CD4-positive, alpha-beta T cell (primary cell): ENCODE measurements at regions of chr10 and their contacts with region 1.

Region 1: DNA sequence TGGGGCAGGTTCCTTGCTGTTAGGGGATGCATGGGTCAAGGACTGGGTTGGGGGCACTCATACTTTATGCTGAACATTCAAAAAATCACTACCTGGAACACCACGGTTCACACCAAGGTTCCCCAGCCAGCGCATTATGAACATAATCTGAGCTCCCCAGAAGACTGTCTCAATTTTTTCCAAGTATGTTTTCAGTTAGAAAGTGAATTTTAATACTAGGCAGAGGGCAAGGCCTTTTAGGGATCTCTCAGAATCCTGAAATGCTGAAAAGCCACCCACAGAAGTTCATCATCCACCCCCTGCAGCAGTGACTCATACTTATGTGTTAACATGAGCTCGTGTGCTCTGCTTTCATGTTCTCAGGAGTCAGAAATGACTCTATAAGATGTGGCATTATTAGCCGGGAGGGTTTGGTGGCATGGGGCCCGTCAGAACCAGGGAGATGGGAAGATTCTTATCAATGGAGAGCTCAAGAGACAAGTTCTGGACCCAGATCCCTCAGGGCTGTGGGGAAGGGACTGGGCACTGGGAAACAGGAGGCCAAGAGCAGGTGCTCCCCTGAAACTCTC is 185.2 kb upstream of the ITGB1 start:
- DNase-seq: peak in 8 of 14 experiments; percentile 20 to 70 (median 30)
- ATAC-seq: peak; percentile 14
- H3K4me3 ChIP-seq: no peak overlapping the region
- H3K4me3 Mint-ChIP-seq: no peak overlapping the region
- H3K27ac ChIP-seq: no peak overlapping the region
- H3K27ac Mint-ChIP-seq: peak overlapping the region; percentile 52
- H3K4me1 ChIP-seq: peaks cover 70% of the 10 kb centered on the region
- H3K4me1 Mint-ChIP-seq: peaks cover 52% of the 10 kb centered on the region
- H3K27me3 ChIP-seq: no peaks in the 10 kb centered on the region
- H3K27me3 Mint-ChIP-seq: no peaks in the 10 kb centered on the region
- CTCF ChIP-seq: no peak

Region 2: DNA sequence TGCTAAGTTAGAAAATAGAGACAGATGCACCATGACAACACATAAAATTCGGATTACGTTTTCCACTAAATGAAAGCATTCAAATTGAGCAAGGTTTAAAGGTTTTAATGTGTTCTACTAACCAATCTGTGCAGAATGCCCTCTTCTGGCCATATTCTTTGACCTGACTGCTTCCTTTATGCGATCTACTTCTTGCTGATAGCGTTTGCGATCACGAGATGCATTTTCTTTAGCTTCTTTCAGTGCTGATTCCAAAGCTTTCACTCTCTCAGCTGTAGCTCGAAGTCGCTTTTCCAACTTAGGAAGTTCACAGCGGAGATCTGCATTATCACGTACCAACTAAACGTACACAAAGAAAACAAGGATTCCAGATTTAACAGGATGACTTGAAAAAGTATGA is 1126.2 kb before region 1 on chr10:
- CTCF ChIA-PET with region 1: no interaction called
- POLR2A ChIA-PET with region 1: no interaction called
- intact Hi-C with region 1: no loop called
- DNase-seq: no peak
- ATAC-seq: no peak
- H3K4me3 ChIP-seq: no peak overlapping the region
- H3K4me3 Mint-ChIP-seq: peak overlapping the region; percentile 7
- H3K27ac ChIP-seq: no peak overlapping the region
- H3K27ac Mint-ChIP-seq: peak overlapping the region; percentile 67
- H3K4me1 ChIP-seq: no peaks in the 10 kb centered on the region
- H3K4me1 Mint-ChIP-seq: no peaks in the 10 kb centered on the region
- H3K27me3 ChIP-seq: no peaks in the 10 kb centered on the region
- H3K27me3 Mint-ChIP-seq: no peaks in the 10 kb centered on the region
- CTCF ChIP-seq: no peak

Region 3: DNA sequence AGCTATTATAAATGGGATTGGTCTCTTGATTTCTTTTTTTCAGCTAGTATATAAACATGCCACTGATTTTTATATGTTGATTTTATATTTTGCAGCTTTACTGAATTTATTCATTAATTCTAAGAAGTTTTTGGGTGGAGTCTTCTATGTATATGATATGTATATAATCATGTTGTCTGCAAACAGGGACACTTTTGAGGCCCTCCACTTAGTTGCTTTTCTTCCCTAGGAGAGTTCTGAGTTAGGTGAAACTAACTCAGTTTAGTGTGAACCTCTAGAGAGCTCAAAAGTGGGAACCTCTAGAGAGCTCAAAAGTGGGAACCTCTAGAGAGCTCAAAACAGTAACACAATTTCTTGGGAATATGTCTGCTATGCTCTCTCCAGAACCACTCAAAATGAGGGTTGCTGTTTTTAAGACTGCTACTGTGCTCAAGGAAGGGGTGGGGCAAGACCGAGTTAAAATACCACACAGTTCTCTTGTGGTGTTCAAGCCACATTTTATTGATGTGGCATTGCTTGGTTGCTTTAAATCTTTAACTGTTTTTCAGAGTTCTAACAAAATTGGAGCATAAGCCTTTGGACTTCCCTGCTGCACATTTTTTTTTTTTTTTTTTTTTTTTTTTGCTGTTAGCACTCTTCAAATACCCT is 684.1 kb before region 1 on chr10:
- CTCF ChIA-PET with region 1: no interaction called
- POLR2A ChIA-PET with region 1: no interaction called
- intact Hi-C with region 1: loop called in 1 of 2 experiments (anchors 1 kb)
- DNase-seq: peak in 13 of 14 experiments; percentile 23 to 90 (median 43)
- ATAC-seq: peak; percentile 99
- H3K4me3 ChIP-seq: peak overlapping the region; percentile 9
- H3K4me3 Mint-ChIP-seq: peak overlapping the region; percentile 85
- H3K27ac ChIP-seq: no peak overlapping the region
- H3K27ac Mint-ChIP-seq: peak overlapping the region; percentile 95
- H3K4me1 ChIP-seq: peaks cover 11% of the 10 kb centered on the region
- H3K4me1 Mint-ChIP-seq: peaks cover 60% of the 10 kb centered on the region
- H3K27me3 ChIP-seq: no peaks in the 10 kb centered on the region
- H3K27me3 Mint-ChIP-seq: no peaks in the 10 kb centered on the region
- CTCF ChIP-seq: no peak

Region 4: GRCh38 chr10:32980558-32981468 is 162.4 kb before region 1 on chr10:
- CTCF ChIA-PET with region 1: no interaction called
- POLR2A ChIA-PET with region 1: interaction called, 10 read pairs
- intact Hi-C with region 1: no loop called
- DNase-seq: peak; percentile 71 to 93 (median 80)
- ATAC-seq: peak; percentile 96
- H3K4me3 ChIP-seq: peak overlapping the region; percentile 77
- H3K4me3 Mint-ChIP-seq: peak overlapping the region; percentile 92
- H3K27ac ChIP-seq: peak overlapping the region; percentile 70 to 90
- H3K27ac Mint-ChIP-seq: peak overlapping the region; percentile 92
- H3K4me1 ChIP-seq: peaks cover 28% of the 10 kb centered on the region
- H3K4me1 Mint-ChIP-seq: peaks cover 23% of the 10 kb centered on the region
- H3K27me3 ChIP-seq: no peaks in the 10 kb centered on the region
- H3K27me3 Mint-ChIP-seq: no peaks in the 10 kb centered on the region
- CTCF ChIP-seq: no peak

Region 5: GRCh38 chr10:33109788-33110469 is 33.3 kb before region 1 on chr10:
- CTCF ChIA-PET with region 1: no interaction called
- POLR2A ChIA-PET with region 1: interaction called, 42 read pairs
- intact Hi-C with region 1: no loop called
- DNase-seq: peak in 3 of 14 experiments; percentile 58 to 83 (median 61)
- ATAC-seq: peak; percentile 37
- H3K4me3 ChIP-seq: peak overlapping the region; percentile 7
- H3K4me3 Mint-ChIP-seq: peak overlapping the region; percentile 3
- H3K27ac ChIP-seq: peak overlapping the region; percentile 48 to 79
- H3K27ac Mint-ChIP-seq: peak overlapping the region; percentile 75
- H3K4me1 ChIP-seq: peaks cover 80% of the 10 kb centered on the region
- H3K4me1 Mint-ChIP-seq: peaks cover 72% of the 10 kb centered on the region
- H3K27me3 ChIP-seq: no peaks in the 10 kb centered on the region
- H3K27me3 Mint-ChIP-seq: no peaks in the 10 kb centered on the region
- CTCF ChIP-seq: no peak

Region 6: GRCh38 chr10:33115738-33116719 is 27.2 kb before region 1 on chr10:
- CTCF ChIA-PET with region 1: interaction called, 16 read pairs
- POLR2A ChIA-PET with region 1: interaction called, 42 read pairs
- intact Hi-C with region 1: loop called in 1 of 2 experiments (anchors 2 kb)
- DNase-seq: peak in 4 of 14 experiments; percentile 51 to 74 (median 66)
- ATAC-seq: peak; percentile 28
- H3K4me3 ChIP-seq: peak overlapping the region; percentile 50
- H3K4me3 Mint-ChIP-seq: peak overlapping the region; percentile 70
- H3K27ac ChIP-seq: peak overlapping the region; percentile 38 to 79
- H3K27ac Mint-ChIP-seq: peak overlapping the region; percentile 88
- H3K4me1 ChIP-seq: peaks cover 72% of the 10 kb centered on the region
- H3K4me1 Mint-ChIP-seq: peaks cover 91% of the 10 kb centered on the region
- H3K27me3 ChIP-seq: no peaks in the 10 kb centered on the region
- H3K27me3 Mint-ChIP-seq: no peaks in the 10 kb centered on the region
- CTCF ChIP-seq: peak; percentile 47

Region 7: DNA sequence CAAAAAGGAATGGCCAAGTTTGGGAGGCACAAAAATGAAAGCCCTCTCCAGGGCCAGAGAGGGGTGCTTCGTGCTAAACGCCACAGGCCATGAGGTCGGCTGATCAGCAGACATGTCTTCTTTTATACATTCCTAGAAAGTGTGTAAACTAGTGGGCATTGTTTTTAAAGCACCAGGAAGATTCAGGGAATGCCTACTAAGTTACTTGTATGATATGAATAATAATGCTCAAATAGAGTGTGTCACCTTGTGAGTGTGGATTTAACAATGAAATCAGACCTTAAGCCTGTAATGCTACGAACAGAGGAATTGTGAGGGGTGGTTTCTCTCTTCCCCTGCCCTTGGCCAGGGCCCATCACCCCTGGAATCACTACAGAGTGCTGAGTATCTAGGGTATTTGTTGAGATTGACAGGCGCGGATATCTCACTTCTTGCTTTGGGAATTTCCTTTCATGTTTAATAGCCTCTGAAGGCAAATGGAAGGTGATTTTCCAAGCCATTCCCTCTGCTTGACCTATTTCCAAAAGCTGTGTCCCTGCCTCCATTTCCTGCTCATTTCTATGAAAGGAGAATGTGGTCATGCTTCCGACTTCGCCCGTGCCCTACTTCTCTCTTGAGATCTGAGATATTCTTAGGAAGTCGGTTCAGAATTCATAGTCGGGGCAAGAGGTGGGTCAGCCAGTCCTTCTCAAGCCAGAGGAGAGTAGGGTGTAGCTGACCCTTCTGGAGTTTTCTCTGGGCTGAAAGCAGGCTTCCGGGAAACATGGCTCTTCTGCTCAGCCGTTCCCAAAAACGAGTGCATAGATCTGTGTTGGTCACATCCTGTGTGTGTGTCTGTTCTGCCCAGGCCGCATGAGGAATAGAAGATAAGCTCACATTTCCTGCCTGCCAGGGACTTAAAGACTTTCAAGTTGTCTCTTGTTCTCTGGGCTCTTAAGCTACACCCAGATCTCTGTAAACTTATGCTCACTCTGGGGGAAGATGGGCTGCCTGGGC is 17.4 kb before region 1 on chr10:
- CTCF ChIA-PET with region 1: interaction called, 11 read pairs
- POLR2A ChIA-PET with region 1: interaction called, 68 read pairs
- intact Hi-C with region 1: loop called in 1 of 2 experiments (anchors 2 kb)
- DNase-seq: peak in 9 of 14 experiments; percentile 26 to 86 (median 49)
- ATAC-seq: peak; percentile 89
- H3K4me3 ChIP-seq: no peak overlapping the region
- H3K4me3 Mint-ChIP-seq: peak overlapping the region; percentile 65
- H3K27ac ChIP-seq: peak overlapping the region; percentile 63 to 83
- H3K27ac Mint-ChIP-seq: peak overlapping the region; percentile 96
- H3K4me1 ChIP-seq: peaks cover 87% of the 10 kb centered on the region
- H3K4me1 Mint-ChIP-seq: peaks cover 90% of the 10 kb centered on the region
- H3K27me3 ChIP-seq: no peaks in the 10 kb centered on the region
- H3K27me3 Mint-ChIP-seq: no peaks in the 10 kb centered on the region
- CTCF ChIP-seq: no peak